Astrocyte of the cerebellum (primary cell): ENCODE measurements at regions of chr14 and their contacts with region 1.

Region 1: DNA sequence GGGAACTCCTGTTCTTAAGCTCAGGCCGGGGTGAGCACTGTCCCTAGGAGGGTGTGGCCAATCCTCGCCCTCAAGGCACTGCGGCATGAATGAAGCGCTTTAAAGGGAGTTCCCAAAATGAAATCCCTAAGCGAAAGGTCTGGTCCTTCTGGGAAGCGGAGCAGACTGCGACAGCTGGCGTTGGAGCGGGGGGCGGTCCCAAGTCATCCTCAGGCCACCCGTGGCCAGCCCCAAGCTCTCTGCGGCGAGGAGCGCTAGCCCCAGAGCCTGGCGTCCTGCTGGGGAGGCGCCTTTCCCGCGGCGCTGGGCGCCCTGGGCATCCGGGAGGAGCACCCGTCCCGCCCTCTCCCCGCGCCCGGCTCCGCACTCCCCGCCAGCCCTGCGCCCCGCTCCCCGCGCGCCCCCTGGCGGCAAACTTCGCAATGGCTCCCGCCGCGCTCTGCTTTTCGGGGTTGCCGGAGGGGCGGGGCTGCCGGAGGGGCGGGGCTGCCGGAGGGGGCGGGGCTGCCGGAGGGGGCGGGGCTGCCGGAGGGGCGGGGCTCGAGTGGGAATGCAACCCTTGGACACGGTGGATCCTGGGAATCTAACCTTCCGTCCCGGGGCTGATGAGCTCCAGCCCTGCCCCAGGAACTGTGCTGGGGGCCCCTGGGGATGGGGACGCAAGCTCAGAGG is 25.4 kb downstream of the ZBTB42 start:
- DNase-seq: no peak
- H3K4me3 ChIP-seq: peak overlapping the region; percentile 56
- CTCF ChIP-seq: peak; percentile 62

Region 2: GRCh38 chr14:104770851-104771272 is 55.5 kb before region 1 on chr14:
- in situ Hi-C with region 1: loop called (anchors 10 kb)
- DNase-seq: no peak
- H3K4me3 ChIP-seq: no peak overlapping the region
- CTCF ChIP-seq: peak; percentile 64